Dorsolateral prefrontal cortex (tissue), 120 donors: ENCODE measurements at regions of chr1 and their contacts with region 1.

Region 1: GRCh38 chr1:114979278-114979891 is 50.2 kb upstream of the TSHB start:
- DNase-seq: peak in 5 of 10 donors; percentile 24 to 67 (median 36)
- H3K4me3 ChIP-seq: no peak overlapping the region
- H3K27ac ChIP-seq: no peak overlapping the region
- H3K27me3 ChIP-seq: peaks cover 0 to 13% (median 0%) of the 10 kb centered on the region in 45 donors
- CTCF ChIP-seq: peak; percentile 65 to 94 (median 81)

Region 2: DNA sequence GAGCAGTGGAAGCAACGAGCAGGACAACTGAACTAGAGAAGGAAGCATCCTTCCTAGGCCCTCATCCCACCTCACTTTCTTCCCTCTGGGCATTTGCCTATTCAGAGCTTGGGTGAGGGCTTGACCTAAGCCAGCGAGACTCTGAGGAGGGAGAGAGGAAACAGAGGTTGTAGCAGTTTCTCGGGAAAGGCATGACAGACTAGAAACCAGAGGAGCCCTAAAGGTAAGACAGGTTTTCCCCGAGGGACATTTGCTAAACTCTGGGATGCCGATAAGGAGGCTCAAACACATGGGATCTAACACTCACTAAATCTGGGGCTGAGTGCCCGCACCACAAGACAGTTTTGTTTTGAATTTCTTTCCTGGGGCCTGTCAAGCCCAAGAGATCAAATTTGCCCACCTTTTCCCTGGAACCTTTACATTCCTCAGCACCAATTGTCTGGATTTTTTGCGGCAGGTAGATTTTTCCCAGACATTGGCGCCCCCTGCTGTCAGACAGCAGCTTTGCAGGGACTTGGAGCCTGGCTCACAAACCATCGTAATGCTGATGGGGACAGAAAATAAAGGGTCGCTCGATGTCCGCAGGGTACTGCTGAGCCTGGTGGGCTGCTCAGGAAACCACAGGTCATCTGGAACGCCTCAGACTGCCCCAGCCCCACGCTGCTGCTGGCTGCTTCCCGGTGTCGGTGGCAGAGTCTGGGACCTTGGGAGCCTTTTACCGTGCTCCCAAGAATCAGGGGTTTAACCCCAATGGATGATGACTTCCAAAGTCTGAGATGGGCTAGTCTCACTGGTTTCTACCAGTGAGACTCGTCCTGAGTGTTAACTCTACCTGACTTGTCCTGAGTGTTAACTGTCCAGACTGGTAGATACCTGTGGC is 133.4 kb after region 1 on chr1:
- intact Hi-C with region 1: loop called (anchors 2 kb)
- DNase-seq: peak in 3 of 10 donors; percentile 24 to 69 (median 57)
- H3K4me3 ChIP-seq: no peak overlapping the region
- H3K27ac ChIP-seq: no peak overlapping the region
- H3K27me3 ChIP-seq: no peaks in the 10 kb centered on the region
- CTCF ChIP-seq: peak; percentile 63 to 96 (median 90)

Region 3: DNA sequence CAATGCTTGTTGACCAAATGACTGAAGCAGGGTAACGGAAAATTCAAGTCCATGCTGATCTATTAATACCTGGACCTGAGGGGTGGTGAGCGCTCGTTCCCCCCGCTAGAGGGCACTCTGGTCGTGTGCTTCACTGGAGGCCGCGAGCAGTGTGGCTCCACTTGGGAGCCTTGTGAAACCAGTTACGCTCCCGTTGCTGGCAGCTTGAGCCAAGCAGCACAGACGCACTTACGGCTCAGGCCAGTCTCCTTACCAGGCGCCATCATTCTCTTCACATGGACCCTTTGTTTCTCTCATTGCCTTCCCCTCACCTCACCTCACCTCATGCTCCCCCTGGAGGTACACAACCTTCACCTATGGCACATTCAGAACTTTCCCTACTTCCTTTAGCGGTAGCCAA is 159.6 kb after region 1 on chr1:
- intact Hi-C with region 1: no loop called
- DNase-seq: peak; percentile 38 to 82 (median 74)
- H3K4me3 ChIP-seq: peak overlapping the region in 1 of 59 donors; percentile 7
- H3K27ac ChIP-seq: no peak overlapping the region
- H3K27me3 ChIP-seq: peaks cover 0 to 26% (median 4%) of the 10 kb centered on the region in 45 donors
- CTCF ChIP-seq: peak; percentile 73 to 96 (median 87)